ENCODE measurements at regions of chr1 and their contacts with region 1.

Region 1: GRCh38 chr1:18100491-18101063 is 7.0 kb upstream of the IGSF21 start:
- DNase-seq: peak; percentile 13 to 67 (median 34)
- ATAC-seq: no peak
- H3K4me3 ChIP-seq: no peak overlapping the region
- H3K4me3 Mint-ChIP-seq: no peak overlapping the region
- H3K27ac ChIP-seq: no peak overlapping the region
- H3K27ac Mint-ChIP-seq: no peak overlapping the region
- H3K4me1 ChIP-seq: no peaks in the 10 kb centered on the region
- H3K4me1 Mint-ChIP-seq: no peaks in the 10 kb centered on the region
- H3K27me3 ChIP-seq: peaks cover 6 to 28% of the 10 kb centered on the region in 2 experiments
- H3K27me3 Mint-ChIP-seq: peaks cover 66% of the 10 kb centered on the region
- CTCF ChIP-seq: peak; percentile 80

Region 2: GRCh38 chr1:17494114-17494729 is 606.4 kb before region 1 on chr1:
- CTCF ChIA-PET with region 1: no interaction called
- POLR2A ChIA-PET with region 1: no interaction called
- intact Hi-C with region 1: loop called in 1 of 2 experiments (anchors 5 kb)
- DNase-seq: peak; percentile 36 to 73 (median 45)
- ATAC-seq: peak; percentile 70
- H3K4me3 ChIP-seq: no peak overlapping the region
- H3K4me3 Mint-ChIP-seq: no peak overlapping the region
- H3K27ac ChIP-seq: no peak overlapping the region
- H3K27ac Mint-ChIP-seq: no peak overlapping the region
- H3K4me1 ChIP-seq: no peaks in the 10 kb centered on the region
- H3K4me1 Mint-ChIP-seq: no peaks in the 10 kb centered on the region
- H3K27me3 ChIP-seq: no peaks in the 10 kb centered on the region
- H3K27me3 Mint-ChIP-seq: peaks cover 19% of the 10 kb centered on the region
- CTCF ChIP-seq: peak; percentile 71

Region 3: GRCh38 chr1:17661546-17662157 is 438.9 kb before region 1 on chr1:
- CTCF ChIA-PET with region 1: no interaction called
- POLR2A ChIA-PET with region 1: no interaction called
- intact Hi-C with region 1: loop called in 1 of 2 experiments (anchors 2 kb)
- DNase-seq: peak; percentile 17 to 64 (median 39)
- ATAC-seq: no peak
- H3K4me3 ChIP-seq: no peak overlapping the region
- H3K4me3 Mint-ChIP-seq: no peak overlapping the region
- H3K27ac ChIP-seq: no peak overlapping the region
- H3K27ac Mint-ChIP-seq: no peak overlapping the region
- H3K4me1 ChIP-seq: no peaks in the 10 kb centered on the region
- H3K4me1 Mint-ChIP-seq: no peaks in the 10 kb centered on the region
- H3K27me3 ChIP-seq: no peaks in the 10 kb centered on the region
- H3K27me3 Mint-ChIP-seq: no peaks in the 10 kb centered on the region
- CTCF ChIP-seq: peak; percentile 73

Region 4: DNA sequence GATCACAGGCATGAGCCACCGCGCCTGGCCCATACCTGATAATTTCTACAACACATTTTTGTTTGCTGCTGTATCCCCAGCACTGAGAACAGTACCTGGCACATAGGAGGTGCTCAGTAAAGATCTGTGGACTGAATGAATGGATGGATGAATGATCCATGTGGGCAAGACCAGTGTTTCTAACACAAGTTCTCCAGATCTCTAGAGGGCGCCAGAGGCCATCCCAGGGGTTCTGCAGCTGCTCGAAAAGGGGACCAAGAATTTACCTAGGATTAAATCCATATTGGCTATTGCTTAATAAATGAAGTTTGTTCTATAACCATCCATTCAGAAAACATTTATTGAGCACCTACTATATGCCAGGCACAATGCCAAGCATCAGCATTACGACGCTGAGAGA is 177.7 kb before region 1 on chr1:
- CTCF ChIA-PET with region 1: no interaction called
- POLR2A ChIA-PET with region 1: no interaction called
- intact Hi-C with region 1: loop called (anchors 2 kb)
- DNase-seq: peak in 7 of 14 experiments; percentile 4 to 21 (median 11)
- ATAC-seq: no peak
- H3K4me3 ChIP-seq: no peak overlapping the region
- H3K4me3 Mint-ChIP-seq: no peak overlapping the region
- H3K27ac ChIP-seq: no peak overlapping the region
- H3K27ac Mint-ChIP-seq: no peak overlapping the region
- H3K4me1 ChIP-seq: no peaks in the 10 kb centered on the region
- H3K4me1 Mint-ChIP-seq: no peaks in the 10 kb centered on the region
- H3K27me3 ChIP-seq: peaks cover 6 to 23% of the 10 kb centered on the region in 2 experiments
- H3K27me3 Mint-ChIP-seq: peaks cover 65% of the 10 kb centered on the region
- CTCF ChIP-seq: peak; percentile 27

Region 5: DNA sequence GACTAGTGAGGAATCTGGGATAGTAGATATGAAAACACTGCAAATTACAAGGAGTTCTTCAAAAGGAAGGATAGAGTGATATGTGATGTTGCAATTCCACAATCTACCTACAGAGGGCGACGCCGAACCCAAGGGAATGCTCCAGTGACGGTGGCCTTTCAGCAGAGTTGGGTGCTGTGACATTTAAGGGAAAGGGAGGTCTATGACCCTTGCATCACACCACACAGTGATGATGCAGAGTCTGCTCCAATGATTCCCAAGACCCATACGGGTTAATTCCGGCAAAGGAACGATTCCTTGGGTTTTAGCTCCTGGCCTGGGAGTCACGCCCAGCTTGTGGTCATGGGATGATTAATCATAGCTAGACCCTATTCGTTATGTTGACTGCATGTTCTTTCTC is 116.0 kb before region 1 on chr1:
- CTCF ChIA-PET with region 1: no interaction called
- POLR2A ChIA-PET with region 1: no interaction called
- intact Hi-C with region 1: loop called (anchors 1 to 5 kb)
- DNase-seq: peak in 3 of 14 experiments; percentile 27 to 34 (median 31)
- ATAC-seq: no peak
- H3K4me3 ChIP-seq: no peak overlapping the region
- H3K4me3 Mint-ChIP-seq: no peak overlapping the region
- H3K27ac ChIP-seq: no peak overlapping the region
- H3K27ac Mint-ChIP-seq: no peak overlapping the region
- H3K4me1 ChIP-seq: no peaks in the 10 kb centered on the region
- H3K4me1 Mint-ChIP-seq: no peaks in the 10 kb centered on the region
- H3K27me3 ChIP-seq: peaks cover 0 to 8% of the 10 kb centered on the region in 2 experiments
- H3K27me3 Mint-ChIP-seq: peaks cover 24% of the 10 kb centered on the region
- CTCF ChIP-seq: peak; percentile 20

Region 6: DNA sequence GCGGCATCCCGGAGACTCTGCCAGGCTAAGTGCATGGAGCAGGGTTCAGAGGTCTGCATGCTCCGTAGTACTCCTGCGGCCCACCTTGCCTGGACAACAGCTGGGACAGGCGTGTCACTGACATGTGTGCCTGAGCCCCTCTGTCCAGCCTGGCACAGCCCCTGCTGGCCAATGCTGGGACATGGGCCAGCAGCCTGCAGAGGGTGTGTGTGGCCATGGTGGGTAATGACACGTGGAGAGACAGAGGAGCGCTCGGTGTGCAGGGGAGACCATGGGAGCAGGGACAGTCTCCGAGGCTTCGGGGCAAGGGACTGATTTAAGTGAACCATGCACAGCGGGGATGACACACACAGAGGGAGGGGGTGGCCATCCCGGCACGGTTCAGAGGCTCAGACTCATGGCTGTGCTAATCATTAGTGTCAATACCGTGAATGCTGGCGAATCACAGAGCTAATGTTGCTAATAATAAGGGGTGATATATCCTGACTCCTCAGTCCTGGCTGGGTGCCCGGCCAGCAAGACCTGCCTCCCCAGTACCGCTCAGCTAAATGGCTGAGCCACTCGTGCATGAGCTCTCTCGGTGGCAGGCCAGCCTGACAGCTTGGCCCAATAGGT is 48.6 kb after region 1 on chr1:
- CTCF ChIA-PET with region 1: no interaction called
- POLR2A ChIA-PET with region 1: no interaction called
- intact Hi-C with region 1: no loop called
- DNase-seq: no peak
- ATAC-seq: no peak
- H3K4me3 ChIP-seq: no peak overlapping the region
- H3K4me3 Mint-ChIP-seq: no peak overlapping the region
- H3K27ac ChIP-seq: no peak overlapping the region
- H3K27ac Mint-ChIP-seq: no peak overlapping the region
- H3K4me1 ChIP-seq: no peaks in the 10 kb centered on the region
- H3K4me1 Mint-ChIP-seq: no peaks in the 10 kb centered on the region
- H3K27me3 ChIP-seq: no peaks in the 10 kb centered on the region
- H3K27me3 Mint-ChIP-seq: peaks cover 5% of the 10 kb centered on the region
- CTCF ChIP-seq: no peak